HAP-1 (cell line): ENCODE measurements at regions of chr1 and their contacts with region 1.

Region 1: GRCh38 chr1:243343970-243344937 is 88.4 kb downstream of the SDCCAG8 start:
- DNase-seq: peak in 1 of 2 experiments; percentile 65
- H3K4me3 ChIP-seq: no peak overlapping the region
- H3K4me1 ChIP-seq: peaks cover 8% of the 10 kb centered on the region
- H3K27me3 ChIP-seq: no peaks in the 10 kb centered on the region

Region 2: GRCh38 chr1:243213045-243213787 is 131.0 kb before region 1 on chr1:
- in situ Hi-C with region 1: no loop called
- DNase-seq: no peak
- H3K4me3 ChIP-seq: no peak overlapping the region
- H3K4me1 ChIP-seq: no peaks in the 10 kb centered on the region
- H3K27me3 ChIP-seq: no peaks in the 10 kb centered on the region

Region 3: DNA sequence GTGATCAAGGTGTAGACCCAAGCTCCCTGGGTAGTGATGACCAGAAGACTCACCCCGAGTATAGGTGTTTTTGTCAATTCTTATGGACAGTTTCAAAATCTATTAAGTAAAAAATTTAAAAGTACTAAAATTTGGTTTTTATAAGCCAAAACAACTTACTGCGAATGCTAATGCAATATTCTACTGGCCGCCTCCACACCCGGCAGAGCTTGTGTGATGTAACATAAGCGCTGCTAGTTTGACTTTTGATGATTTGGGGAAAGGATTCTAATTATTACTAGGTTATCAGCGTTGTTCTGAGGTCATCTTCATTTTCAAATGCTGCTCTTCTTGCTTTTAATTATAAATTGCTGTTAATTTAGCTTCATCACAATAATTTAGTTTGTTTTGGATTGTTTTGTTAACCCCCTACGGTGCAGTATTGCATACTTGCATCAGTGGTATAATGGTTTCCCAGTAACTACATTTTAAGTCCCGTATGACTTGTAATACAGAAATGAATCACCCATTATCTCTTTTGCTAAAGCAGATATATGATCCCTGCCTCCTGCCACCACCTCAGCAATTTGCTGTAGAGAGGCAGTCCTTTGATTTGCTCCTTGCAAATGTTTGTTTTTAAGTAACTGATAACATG is 89.6 kb after region 1 on chr1:
- in situ Hi-C with region 1: no loop called
- DNase-seq: no peak
- H3K4me3 ChIP-seq: no peak overlapping the region
- H3K4me1 ChIP-seq: peaks cover 10% of the 10 kb centered on the region
- H3K27me3 ChIP-seq: no peaks in the 10 kb centered on the region

Region 4: GRCh38 chr1:244272471-244273261 is 928.4 kb after region 1 on chr1:
- in situ Hi-C with region 1: loop called (anchors 10 kb)
- DNase-seq: peak; percentile 77 to 78
- H3K4me3 ChIP-seq: no peak overlapping the region
- H3K4me1 ChIP-seq: peaks cover 3% of the 10 kb centered on the region
- H3K27me3 ChIP-seq: no peaks in the 10 kb centered on the region